Dorsolateral prefrontal cortex (tissue), 120 donors: ENCODE measurements at regions of chr11 and their contacts with region 1.

Region 1: DNA sequence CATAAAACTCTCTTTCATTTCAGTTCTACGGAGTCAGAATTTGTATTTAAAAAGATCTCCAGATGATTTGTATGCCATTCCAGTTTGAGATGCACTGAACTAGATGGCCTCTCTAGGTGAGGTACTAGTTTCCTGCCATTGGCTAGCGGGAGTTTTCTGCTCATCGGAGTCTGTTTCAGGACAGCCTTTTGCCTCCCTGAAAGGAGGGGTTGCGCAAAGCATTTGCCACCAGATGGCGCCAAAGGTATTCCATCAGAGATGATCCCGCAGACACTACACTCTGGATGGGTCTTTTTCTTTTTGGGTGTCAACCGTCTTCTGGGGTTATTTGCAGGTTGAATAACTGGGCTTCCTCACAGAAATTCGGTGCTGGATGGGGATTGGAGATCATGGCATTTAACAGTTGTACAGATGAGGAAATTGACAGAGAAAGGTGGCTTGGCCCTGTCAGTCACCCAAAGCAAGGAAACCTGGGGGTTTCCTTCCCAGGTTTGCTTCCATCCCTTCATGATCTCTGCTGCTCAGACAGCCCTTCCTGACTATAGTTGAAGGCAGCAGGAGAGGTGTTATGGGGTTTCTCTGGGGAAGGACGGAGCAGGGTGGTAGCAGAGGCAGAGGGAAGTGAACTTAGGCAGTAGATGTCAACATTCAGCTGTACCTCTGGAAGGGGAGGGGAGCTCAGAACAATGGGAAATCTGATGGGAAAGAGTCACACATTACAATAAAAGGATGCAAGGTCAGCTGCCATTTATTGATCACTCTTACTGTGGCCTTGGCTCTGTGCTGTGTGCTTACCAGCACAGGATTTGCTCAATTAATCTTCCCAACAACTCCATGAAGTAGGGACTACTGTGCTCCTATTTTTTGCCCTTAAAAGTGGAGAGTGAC is 81.6 kb downstream of the CCDC81 start:
- DNase-seq: peak; percentile 69 to 92 (median 84)
- H3K4me3 ChIP-seq: peak overlapping the region in 1 of 59 donors; percentile 10
- H3K27ac ChIP-seq: no peak overlapping the region
- H3K27me3 ChIP-seq: no peaks in the 10 kb centered on the region
- CTCF ChIP-seq: peak; percentile 83 to 98 (median 93)

Region 2: GRCh38 chr11:86671682-86672621 is 215.7 kb after region 1 on chr11 and contains the start of gene ME3:
- intact Hi-C with region 1: loop called in 1 of 2 experiments (anchors 10 kb)
- DNase-seq: peak; percentile 38 to 76 (median 68)
- H3K4me3 ChIP-seq: peak within 1 kb of the TSS; percentile 55 to 95 (median 82)
- H3K27ac ChIP-seq: peak within 1 kb of the TSS in 58 of 59 donors; percentile 30 to 96 (median 88)
- H3K27me3 ChIP-seq: no peaks in the 10 kb centered on the region
- CTCF ChIP-seq: peak in 3 of 56 donors; percentile 3 to 29 (median 5)
- total RNA-seq, gene ME3: 29.7 to 94.4 (median 68.3) TPM

Region 3: GRCh38 chr11:86818466-86819192 is 362.3 kb after region 1 on chr11:
- intact Hi-C with region 1: loop called (anchors 1 to 2 kb)
- DNase-seq: peak in 1 of 10 donors; percentile 7
- H3K4me3 ChIP-seq: peak overlapping the region in 2 of 59 donors; percentile 1 to 2
- H3K27ac ChIP-seq: no peak overlapping the region
- H3K27me3 ChIP-seq: peaks cover 0 to 13% (median 0%) of the 10 kb centered on the region in 45 donors
- CTCF ChIP-seq: peak; percentile 79 to 96 (median 90)

Region 4: GRCh38 chr11:87057749-87058148 is 601.5 kb after region 1 on chr11:
- intact Hi-C with region 1: no loop called
- DNase-seq: no peak
- H3K4me3 ChIP-seq: no peak overlapping the region
- H3K27ac ChIP-seq: peak overlapping the region in 2 of 59 donors; percentile 10 to 31
- H3K27me3 ChIP-seq: no peaks in the 10 kb centered on the region
- CTCF ChIP-seq: no peak